ENCODE measurements at regions of chrX and their contacts with region 1.

Region 1: DNA sequence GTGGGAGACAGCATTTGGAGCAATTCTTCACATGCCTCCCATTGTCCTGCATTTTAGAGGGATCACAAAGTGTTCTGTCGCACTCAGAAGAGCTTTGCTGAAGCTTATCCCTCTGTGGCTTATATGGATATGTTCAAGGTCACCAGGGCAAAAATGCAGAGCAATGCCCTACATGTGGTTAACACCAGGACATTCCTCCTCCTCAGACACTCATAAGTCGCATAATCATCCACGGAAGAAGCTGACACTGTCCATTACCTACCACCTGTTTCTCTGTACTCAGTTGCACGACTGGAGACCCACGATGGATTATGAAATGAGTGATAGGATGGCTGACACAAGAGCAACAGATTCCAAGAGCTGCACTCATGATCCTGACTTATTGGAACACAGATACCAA is 68.7 kb upstream of the PRDX4 start:
- DNase-seq: no peak

Region 2: GRCh38 chrX:21926527-21927278 is 1671.9 kb before region 1 on chrX:
- intact Hi-C with region 1: loop called in 1 of 2 experiments (anchors 5 kb)
- DNase-seq: no peak

Region 3: GRCh38 chrX:23540532-23540931 is 58.0 kb before region 1 on chrX:
- intact Hi-C with region 1: no loop called
- DNase-seq: no peak

Region 4: DNA sequence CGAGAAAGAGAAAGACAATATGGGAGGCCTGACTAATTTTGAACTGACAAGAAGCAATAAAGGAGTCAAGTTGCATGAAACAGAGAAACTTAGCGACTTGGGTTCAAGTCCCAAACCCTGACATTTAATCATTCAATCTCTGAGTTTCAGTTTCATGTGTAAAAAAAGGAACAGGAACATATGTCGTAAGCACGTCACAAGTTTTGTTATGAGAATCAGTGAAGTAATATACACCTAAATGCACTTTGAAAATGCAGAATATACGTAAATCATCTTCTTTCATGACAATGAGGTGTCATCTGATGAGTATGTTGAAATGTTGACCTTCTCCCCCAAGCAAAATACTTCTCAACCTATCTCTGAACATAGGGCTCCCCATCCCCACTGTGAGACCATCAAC is 134.1 kb after region 1 on chrX:
- intact Hi-C with region 1: no loop called
- DNase-seq: no peak

Measured in posterior vena cava (tissue), 2 donors.